Naive thymus-derived CD4-positive, alpha-beta T cell (primary cell): ENCODE measurements at regions of chr6 and their contacts with region 1.

Region 1: DNA sequence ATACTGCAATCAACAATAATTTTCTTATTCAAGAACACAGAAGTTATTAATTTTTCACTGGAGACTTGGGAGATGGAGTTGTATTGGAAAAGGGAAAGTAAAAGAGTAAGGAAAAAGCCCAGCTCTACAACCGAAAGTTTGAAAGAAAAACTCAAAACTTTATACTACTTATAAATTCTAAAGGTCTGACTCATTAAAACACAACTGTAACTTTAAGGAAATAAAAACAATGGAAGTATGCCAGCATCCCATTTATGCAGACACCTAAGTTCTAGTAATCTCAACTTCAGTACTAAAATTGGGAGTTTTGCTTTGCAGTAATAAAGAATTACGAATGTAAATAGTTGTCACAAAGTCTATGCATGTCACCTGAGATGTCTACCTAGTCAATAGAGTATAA is 80.6 kb downstream of the IRAK1BP1 start:
- DNase-seq: no peak
- ATAC-seq: no peak
- H3K4me3 ChIP-seq: no peak overlapping the region
- H3K4me3 Mint-ChIP-seq: no peak overlapping the region
- H3K27ac ChIP-seq: no peak overlapping the region
- H3K27ac Mint-ChIP-seq: no peak overlapping the region
- H3K4me1 ChIP-seq: no peaks in the 10 kb centered on the region
- H3K4me1 Mint-ChIP-seq: peaks cover 0 to 4% (median 2%) of the 10 kb centered on the region in 7 donors
- H3K27me3 ChIP-seq: no peaks in the 10 kb centered on the region
- H3K27me3 Mint-ChIP-seq: no peaks in the 10 kb centered on the region

Region 2: GRCh38 chr6:78867370-78868040 is 80.5 kb before region 1 on chr6 and contains the start of gene IRAK1BP1:
- CTCF ChIA-PET with region 1: no interaction called
- POLR2A ChIA-PET with region 1: no interaction called
- intact Hi-C with region 1: loop called in 1 of 2 experiments (anchors 5 kb)
- DNase-seq: peak; percentile 39 to 79 (median 76)
- ATAC-seq: peak; percentile 94
- H3K4me3 ChIP-seq: peak within 1 kb of the TSS; percentile 85
- H3K4me3 Mint-ChIP-seq: peak within 1 kb of the TSS; percentile 91 to 100 (median 98)
- H3K27ac ChIP-seq: peak within 1 kb of the TSS; percentile 68
- H3K27ac Mint-ChIP-seq: peak within 1 kb of the TSS; percentile 87 to 97 (median 96)
- H3K4me1 ChIP-seq: peaks cover 0 to 5% of the 10 kb centered on the region in 2 donors
- H3K4me1 Mint-ChIP-seq: peaks cover 6 to 33% (median 27%) of the 10 kb centered on the region in 7 donors
- H3K27me3 ChIP-seq: no peaks in the 10 kb centered on the region
- H3K27me3 Mint-ChIP-seq: no peaks in the 10 kb centered on the region
- total RNA-seq, gene IRAK1BP1: 0.71 to 3.6 (median 3.1) TPM

Region 3: DNA sequence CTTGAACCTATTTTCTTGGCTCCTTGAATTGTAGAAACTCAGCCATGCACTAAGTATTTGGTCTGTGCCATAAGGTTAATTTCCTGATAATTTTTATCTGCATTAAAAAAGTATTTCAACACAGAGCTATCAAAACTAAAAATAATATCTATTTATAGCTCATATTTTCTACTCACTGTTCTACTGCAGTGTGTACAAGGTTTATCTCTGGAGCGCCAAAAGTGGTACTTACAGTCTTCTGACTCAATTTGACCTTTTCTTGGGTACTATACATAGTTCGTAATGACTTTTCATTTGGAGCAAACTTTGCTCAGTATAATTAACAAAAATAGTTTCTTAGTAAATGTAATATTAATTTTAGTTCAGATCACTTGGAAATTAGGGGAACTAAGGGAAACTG is 11.4 kb before region 1 on chr6:
- CTCF ChIA-PET with region 1: no interaction called
- POLR2A ChIA-PET with region 1: no interaction called
- intact Hi-C with region 1: loop called in 1 of 2 experiments (anchors 2 kb)
- DNase-seq: no peak
- ATAC-seq: no peak
- H3K4me3 ChIP-seq: no peak overlapping the region
- H3K4me3 Mint-ChIP-seq: no peak overlapping the region
- H3K27ac ChIP-seq: no peak overlapping the region
- H3K27ac Mint-ChIP-seq: no peak overlapping the region
- H3K4me1 ChIP-seq: no peaks in the 10 kb centered on the region
- H3K4me1 Mint-ChIP-seq: no peaks in the 10 kb centered on the region
- H3K27me3 ChIP-seq: no peaks in the 10 kb centered on the region
- H3K27me3 Mint-ChIP-seq: no peaks in the 10 kb centered on the region

Region 4: GRCh38 chr6:79233611-79234149 is 285.7 kb after region 1 on chr6:
- CTCF ChIA-PET with region 1: interaction called, 3 read pairs
- POLR2A ChIA-PET with region 1: no interaction called
- intact Hi-C with region 1: loop called in 1 of 2 experiments (anchors 5 kb)
- DNase-seq: peak; percentile 34 to 77 (median 54)
- ATAC-seq: peak; percentile 63
- H3K4me3 ChIP-seq: peak overlapping the region; percentile 89
- H3K4me3 Mint-ChIP-seq: peak overlapping the region; percentile 92 to 100 (median 98)
- H3K27ac ChIP-seq: peak overlapping the region; percentile 62
- H3K27ac Mint-ChIP-seq: peak overlapping the region; percentile 64 to 96 (median 90)
- H3K4me1 ChIP-seq: peaks cover 4 to 8% of the 10 kb centered on the region in 2 donors
- H3K4me1 Mint-ChIP-seq: peaks cover 9 to 42% (median 30%) of the 10 kb centered on the region in 7 donors
- H3K27me3 ChIP-seq: no peaks in the 10 kb centered on the region
- H3K27me3 Mint-ChIP-seq: no peaks in the 10 kb centered on the region